ENCODE measurements at regions of chr10 and their contacts with region 1.

Region 1: DNA sequence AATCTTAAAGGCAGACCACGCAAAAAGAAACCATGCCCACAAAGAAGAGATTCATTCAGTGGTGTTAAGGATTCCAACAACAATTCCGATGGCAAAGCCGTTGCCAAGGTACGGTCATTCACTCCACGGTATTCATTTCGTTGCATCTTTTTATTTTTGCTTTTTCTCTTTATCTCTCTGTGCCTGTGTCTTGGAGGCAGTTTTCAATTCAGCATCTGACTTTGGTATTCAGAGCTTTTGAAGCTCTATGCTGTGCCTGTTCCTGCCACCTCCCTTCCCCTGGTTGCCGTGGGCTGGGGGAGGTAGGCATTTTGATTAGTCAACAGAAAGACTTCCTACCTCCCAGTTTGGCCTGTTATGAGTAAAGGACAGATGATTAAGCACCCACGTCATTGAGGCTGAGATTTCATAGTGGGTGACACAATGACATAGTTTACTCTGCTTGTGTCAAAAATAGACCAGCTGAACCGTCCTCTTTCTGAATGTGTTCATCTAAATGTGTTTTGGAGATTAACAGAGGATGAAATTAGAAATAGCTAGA is 149.5 kb downstream of the ARID5B start:
- DNase-seq: peak; percentile 89
- ATAC-seq: peak; percentile 48
- H3K4me3 Mint-ChIP-seq: peak overlapping the region; percentile 87
- H3K27ac Mint-ChIP-seq: peak overlapping the region; percentile 100
- H3K4me1 Mint-ChIP-seq: peaks cover 95% of the 10 kb centered on the region
- H3K27me3 Mint-ChIP-seq: no peaks in the 10 kb centered on the region

Region 2: GRCh38 chr10:61896854-61897661 is 153.9 kb before region 1 on chr10:
- CTCF ChIA-PET with region 1: interaction called, 26 read pairs
- POLR2A ChIA-PET with region 1: interaction called, 74 read pairs
- intact Hi-C with region 1: no loop called
- DNase-seq: peak; percentile 70
- ATAC-seq: peak; percentile 79
- H3K4me3 Mint-ChIP-seq: peak overlapping the region; percentile 94
- H3K27ac Mint-ChIP-seq: peak overlapping the region; percentile 93
- H3K4me1 Mint-ChIP-seq: peaks cover 39% of the 10 kb centered on the region
- H3K27me3 Mint-ChIP-seq: no peaks in the 10 kb centered on the region

Region 3: GRCh38 chr10:61943674-61944410 is 107.1 kb before region 1 on chr10:
- CTCF ChIA-PET with region 1: interaction called, 9 read pairs
- POLR2A ChIA-PET with region 1: interaction called, 62 read pairs
- intact Hi-C with region 1: loop called (anchors 1 kb)
- DNase-seq: peak; percentile 51
- ATAC-seq: peak; percentile 78
- H3K4me3 Mint-ChIP-seq: peak overlapping the region; percentile 59
- H3K27ac Mint-ChIP-seq: peak overlapping the region; percentile 98
- H3K4me1 Mint-ChIP-seq: peaks cover 71% of the 10 kb centered on the region
- H3K27me3 Mint-ChIP-seq: no peaks in the 10 kb centered on the region

Region 4: DNA sequence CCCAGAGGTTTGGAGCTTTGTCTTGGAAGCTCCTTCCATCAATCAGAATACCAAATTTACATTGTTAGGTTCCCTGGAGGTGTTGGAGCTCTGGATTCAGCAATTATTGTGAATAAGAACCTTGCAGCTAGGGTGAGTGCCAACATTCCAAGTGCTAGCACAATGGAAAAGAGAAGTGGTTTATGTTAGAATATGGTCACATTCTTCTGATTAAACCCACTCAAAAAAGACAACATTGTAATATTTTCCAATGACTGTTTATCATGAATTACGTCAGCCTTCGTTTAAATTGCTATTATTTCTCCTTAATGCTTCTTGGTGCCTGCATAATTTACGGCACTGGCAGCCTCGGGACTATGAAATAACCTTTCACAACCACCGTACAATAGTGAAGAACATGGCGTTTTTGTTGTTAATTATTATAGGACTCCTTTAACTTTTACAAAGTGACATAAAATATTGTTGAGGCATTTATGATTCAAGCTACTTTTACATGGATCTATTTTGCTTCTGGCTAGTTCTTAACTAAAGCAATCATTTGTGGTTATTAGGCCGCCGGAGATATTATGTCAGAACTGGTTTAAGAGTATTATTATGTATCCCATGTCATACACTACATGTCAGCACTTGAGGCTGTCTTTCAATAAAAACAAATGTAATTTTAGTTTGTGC is 31.8 kb before region 1 on chr10:
- CTCF ChIA-PET with region 1: interaction called, 9 read pairs
- POLR2A ChIA-PET with region 1: interaction called, 45 read pairs
- intact Hi-C with region 1: loop called (anchors 2 kb)
- DNase-seq: no peak
- ATAC-seq: no peak
- H3K4me3 Mint-ChIP-seq: peak overlapping the region; percentile 11
- H3K27ac Mint-ChIP-seq: peak overlapping the region; percentile 100
- H3K4me1 Mint-ChIP-seq: peaks cover 88% of the 10 kb centered on the region
- H3K27me3 Mint-ChIP-seq: no peaks in the 10 kb centered on the region

Region 5: DNA sequence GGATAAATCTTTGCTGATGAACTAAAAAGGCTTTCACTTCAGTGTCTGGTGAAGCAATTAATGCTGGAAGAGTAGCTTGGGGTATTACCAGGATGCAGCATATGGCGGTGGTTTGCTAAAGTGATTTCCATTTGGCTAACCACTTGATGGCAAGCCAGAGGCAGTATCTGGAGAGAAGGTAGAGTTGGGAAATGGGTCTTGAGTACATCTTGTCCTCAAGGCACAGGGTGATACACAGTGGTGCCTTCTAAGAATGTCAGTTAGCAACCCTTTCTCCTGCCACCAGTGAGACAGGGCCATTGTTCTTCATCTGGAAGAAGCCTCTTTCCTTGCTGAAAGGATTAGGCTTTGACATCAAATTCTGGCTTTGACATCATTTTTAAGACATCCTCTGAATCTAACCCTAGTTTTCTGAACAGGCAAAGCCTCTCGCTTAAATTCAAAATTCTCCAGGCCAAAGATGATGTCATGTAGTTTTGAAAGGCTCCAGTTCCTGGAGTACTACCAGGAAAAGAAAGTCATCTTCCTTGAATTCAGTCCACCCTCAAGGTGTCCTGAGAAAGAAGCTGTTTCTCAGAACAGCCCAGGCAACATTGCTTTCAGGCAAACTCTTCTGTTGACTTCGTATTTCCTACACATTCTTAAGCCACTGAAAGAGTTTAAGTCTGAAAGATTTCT is 13.0 kb after region 1 on chr10:
- CTCF ChIA-PET with region 1: interaction called, 9 read pairs
- POLR2A ChIA-PET with region 1: interaction called, 18 read pairs
- intact Hi-C with region 1: loop called (anchors 1 to 2 kb)
- DNase-seq: no peak
- ATAC-seq: no peak
- H3K4me3 Mint-ChIP-seq: no peak overlapping the region
- H3K27ac Mint-ChIP-seq: peak overlapping the region; percentile 83
- H3K4me1 Mint-ChIP-seq: peaks cover 86% of the 10 kb centered on the region
- H3K27me3 Mint-ChIP-seq: no peaks in the 10 kb centered on the region

Region 6: DNA sequence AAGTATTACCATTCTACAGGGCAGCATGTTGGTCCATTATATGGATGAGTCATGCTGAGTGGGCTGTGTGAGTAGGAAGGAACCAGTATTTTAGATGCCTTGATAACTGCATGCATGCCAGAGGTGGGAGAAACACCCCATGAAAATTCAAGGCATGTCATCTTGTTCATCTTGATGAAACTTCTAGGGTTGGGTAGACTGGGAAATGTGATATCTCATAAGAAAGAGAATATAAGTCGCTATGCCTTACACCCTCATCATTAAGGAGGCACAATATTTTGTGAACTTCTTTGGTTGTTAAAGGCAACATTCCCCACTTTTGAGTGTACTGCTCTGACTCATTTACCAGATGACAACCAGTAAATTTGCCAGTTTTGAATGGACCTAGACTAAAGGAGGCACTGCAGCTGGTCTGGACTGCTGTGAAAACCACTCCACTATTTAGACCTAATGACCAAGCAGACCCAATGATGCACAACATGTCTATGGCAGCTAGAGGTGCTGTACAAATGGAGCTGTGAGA is 371.2 kb after region 1 on chr10:
- CTCF ChIA-PET with region 1: interaction called, 3 read pairs
- POLR2A ChIA-PET with region 1: no interaction called
- intact Hi-C with region 1: loop called in 1 of 2 experiments (anchors 5 kb)
- DNase-seq: no peak
- ATAC-seq: no peak
- H3K4me3 Mint-ChIP-seq: no peak overlapping the region
- H3K27ac Mint-ChIP-seq: no peak overlapping the region
- H3K4me1 Mint-ChIP-seq: peaks cover 23% of the 10 kb centered on the region
- H3K27me3 Mint-ChIP-seq: peaks cover 10% of the 10 kb centered on the region

Region 7: GRCh38 chr10:63268798-63269503 is 1218.0 kb after region 1 on chr10:
- CTCF ChIA-PET with region 1: no interaction called
- POLR2A ChIA-PET with region 1: no interaction called
- intact Hi-C with region 1: loop called in 1 of 2 experiments (anchors 2 kb)
- DNase-seq: peak; percentile 86
- ATAC-seq: peak; percentile 91
- H3K4me3 Mint-ChIP-seq: peak overlapping the region; percentile 94
- H3K27ac Mint-ChIP-seq: peak overlapping the region; percentile 99
- H3K4me1 Mint-ChIP-seq: peaks cover 21% of the 10 kb centered on the region
- H3K27me3 Mint-ChIP-seq: no peaks in the 10 kb centered on the region